ENCODE measurements at regions of chr15 and their contacts with region 1.

Region 1: DNA sequence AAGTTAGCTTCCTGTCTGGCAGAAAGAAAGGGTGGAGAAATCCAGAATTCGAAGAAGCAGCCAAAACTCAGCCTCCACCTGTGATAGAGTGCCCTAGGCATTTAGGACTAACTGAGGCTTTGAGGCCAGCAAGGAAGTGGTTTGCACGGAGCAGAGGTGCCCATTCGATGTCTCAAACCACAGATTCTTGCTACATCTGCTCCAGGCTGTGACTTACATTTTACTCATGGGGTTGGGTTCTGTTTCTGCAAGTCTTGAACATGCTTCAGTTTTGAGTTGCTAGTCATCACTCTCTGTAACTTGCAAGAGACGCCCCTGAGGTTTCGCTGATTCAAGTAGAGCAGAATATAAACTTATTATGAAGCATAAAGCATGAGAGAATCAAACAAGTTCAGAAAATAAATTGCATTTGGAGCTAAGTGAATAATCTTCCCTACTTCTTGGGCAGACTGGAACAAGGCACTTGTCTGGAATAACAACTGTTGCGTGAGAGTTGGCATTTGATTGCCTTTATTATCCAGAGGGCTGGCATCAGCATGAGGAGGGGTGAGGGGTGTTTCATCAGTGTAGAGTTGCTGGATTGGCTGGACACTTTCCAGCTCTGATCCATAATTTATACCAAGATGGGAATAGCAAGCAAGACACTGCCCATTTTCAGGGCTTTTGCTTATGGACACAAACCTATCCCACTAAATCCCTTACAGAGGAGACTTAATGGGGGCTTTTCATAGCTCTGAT is 256.5 kb downstream of the AGBL1 start:
- DNase-seq: peak; percentile 100
- H3K4me3 ChIP-seq: peak overlapping the region in 2 of 3 experiments; percentile 3 to 32
- H3K27ac ChIP-seq: peak overlapping the region; percentile 95
- H3K4me1 ChIP-seq: peaks cover 23% of the 10 kb centered on the region
- H3K27me3 ChIP-seq: no peaks in the 10 kb centered on the region
- CTCF ChIP-seq: no peak

Region 2: DNA sequence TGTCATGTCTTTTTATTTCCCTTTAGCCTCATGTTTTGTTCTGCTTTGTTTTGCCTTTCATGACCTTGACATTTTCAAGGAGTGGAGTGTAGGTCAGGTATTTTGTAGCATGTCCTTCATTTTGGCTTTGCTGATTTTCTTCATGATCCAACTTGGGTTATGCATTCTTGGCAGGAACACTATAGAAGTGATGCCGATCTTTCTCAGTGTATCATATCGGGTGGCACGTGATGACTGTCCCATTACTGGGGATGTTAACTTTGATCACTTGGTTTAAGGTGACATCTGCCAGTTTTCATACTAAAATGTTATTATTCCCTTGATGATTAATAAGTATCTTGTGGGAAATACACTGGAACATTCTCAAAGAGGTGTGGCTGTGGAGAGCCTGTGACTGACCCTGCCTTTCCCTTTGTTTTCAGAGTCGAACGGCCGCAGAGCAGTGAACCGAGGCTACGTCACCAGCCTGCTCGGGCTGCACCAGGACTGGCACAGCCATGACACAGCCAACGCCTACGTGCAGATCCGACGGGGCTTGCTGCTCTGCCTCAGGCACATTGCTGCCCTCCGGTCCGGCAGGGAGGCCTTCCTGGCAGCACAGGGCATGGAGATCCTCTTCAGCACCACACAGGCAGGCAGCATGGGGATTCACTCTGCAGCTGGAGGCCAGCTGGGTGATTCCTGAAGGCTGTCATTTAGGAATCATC is 88.8 kb before region 1 on chr15:
- CTCF ChIA-PET with region 1: no interaction called
- dilution Hi-C with region 1: no loop called
- in situ Hi-C with region 1: no loop called
- intact Hi-C with region 1: loop called (anchors 5 kb)
- DNase-seq: peak; percentile 92
- H3K4me3 ChIP-seq: no peak overlapping the region
- H3K27ac ChIP-seq: peak overlapping the region; percentile 55
- H3K4me1 ChIP-seq: peaks cover 14% of the 10 kb centered on the region
- H3K27me3 ChIP-seq: no peaks in the 10 kb centered on the region
- CTCF ChIP-seq: no peak

Region 3: DNA sequence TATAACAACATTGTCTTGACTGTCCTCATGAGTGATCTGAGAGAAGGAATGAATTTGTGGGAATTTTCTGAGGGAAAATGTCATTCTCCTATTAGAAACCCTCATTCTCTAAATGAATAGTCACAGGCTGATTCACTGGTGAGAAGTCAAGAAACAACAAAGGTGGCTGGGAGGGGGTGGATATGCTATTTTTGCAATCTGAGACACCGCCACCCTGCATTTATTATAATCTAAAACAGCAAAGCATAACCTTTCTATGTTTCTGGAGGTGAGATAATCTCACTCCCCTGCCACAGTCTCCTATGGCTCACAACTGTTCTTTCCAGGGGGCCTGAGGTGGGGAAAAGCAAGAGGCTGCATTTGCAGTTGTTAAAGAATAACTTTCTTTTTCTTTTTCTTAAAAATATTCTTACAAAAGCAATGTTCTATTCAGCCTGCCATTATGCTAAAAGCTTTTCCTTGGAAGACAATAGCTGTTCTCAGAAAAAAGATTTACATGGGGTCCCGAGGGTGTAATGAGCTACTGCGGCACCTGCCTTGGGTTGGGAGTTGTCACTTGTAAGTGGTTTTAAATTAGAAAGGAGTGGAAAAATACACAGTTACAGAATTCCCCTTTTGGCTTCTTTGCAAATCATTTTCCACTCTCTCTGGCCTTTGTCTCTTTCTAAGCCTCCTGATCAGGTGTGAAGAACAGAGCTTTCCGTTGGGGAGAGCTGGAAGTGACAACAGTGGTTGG is 35.7 kb before region 1 on chr15:
- CTCF ChIA-PET with region 1: no interaction called
- dilution Hi-C with region 1: no loop called
- in situ Hi-C with region 1: no loop called
- intact Hi-C with region 1: loop called (anchors 5 kb)
- DNase-seq: peak; percentile 67
- H3K4me3 ChIP-seq: no peak overlapping the region
- H3K27ac ChIP-seq: peak overlapping the region; percentile 22
- H3K4me1 ChIP-seq: peaks cover 13% of the 10 kb centered on the region
- H3K27me3 ChIP-seq: no peaks in the 10 kb centered on the region
- CTCF ChIP-seq: no peak

Region 4: DNA sequence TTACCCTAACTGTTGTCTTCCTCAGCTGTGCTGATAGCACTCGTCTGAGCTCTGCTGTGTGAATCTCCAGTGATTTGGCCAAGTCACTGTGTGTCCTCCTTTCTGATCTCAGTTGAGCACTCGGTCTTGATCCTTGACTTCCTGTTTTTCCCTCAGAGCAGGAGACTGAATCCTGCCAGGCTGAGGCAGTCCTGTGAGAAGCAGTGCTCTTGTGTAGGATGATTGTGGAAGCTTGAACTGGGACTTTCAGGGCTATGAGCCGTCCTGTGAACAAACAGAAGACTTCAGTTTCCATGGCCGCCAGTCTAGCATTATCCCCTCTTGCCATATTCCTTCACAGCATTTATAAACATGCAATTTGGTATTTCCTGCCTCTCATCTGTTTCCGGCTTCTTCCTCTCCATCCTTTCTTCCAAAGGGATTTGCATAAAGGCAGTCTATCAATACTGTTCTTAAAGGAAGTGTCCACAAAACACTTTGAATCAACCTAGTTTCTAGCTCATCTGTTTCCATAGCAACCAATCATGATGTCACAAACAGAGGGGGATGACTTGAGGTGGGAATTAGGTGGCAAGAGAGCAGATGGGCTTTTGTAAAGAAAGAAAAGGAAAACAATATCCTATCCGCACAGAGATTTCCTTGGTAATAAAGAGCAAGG is 19.4 kb before region 1 on chr15:
- CTCF ChIA-PET with region 1: no interaction called
- dilution Hi-C with region 1: no loop called
- in situ Hi-C with region 1: no loop called
- intact Hi-C with region 1: loop called (anchors 1 kb)
- DNase-seq: no peak
- H3K4me3 ChIP-seq: no peak overlapping the region
- H3K27ac ChIP-seq: peak overlapping the region; percentile 26
- H3K4me1 ChIP-seq: peaks cover 6% of the 10 kb centered on the region
- H3K27me3 ChIP-seq: no peaks in the 10 kb centered on the region
- CTCF ChIP-seq: no peak

Region 5: GRCh38 chr15:86362555-86362954 is 26.3 kb after region 1 on chr15:
- CTCF ChIA-PET with region 1: no interaction called
- dilution Hi-C with region 1: no loop called
- in situ Hi-C with region 1: no loop called
- intact Hi-C with region 1: loop called (anchors 2 kb)
- DNase-seq: peak; percentile 98
- H3K4me3 ChIP-seq: no peak overlapping the region
- H3K27ac ChIP-seq: peak overlapping the region; percentile 75
- H3K4me1 ChIP-seq: peaks cover 16% of the 10 kb centered on the region
- H3K27me3 ChIP-seq: no peaks in the 10 kb centered on the region
- CTCF ChIP-seq: no peak

Region 6: GRCh38 chr15:86384186-86384585 is 48.0 kb after region 1 on chr15:
- CTCF ChIA-PET with region 1: no interaction called
- dilution Hi-C with region 1: no loop called
- in situ Hi-C with region 1: no loop called
- intact Hi-C with region 1: no loop called
- DNase-seq: no peak
- H3K4me3 ChIP-seq: no peak overlapping the region
- H3K27ac ChIP-seq: no peak overlapping the region
- H3K4me1 ChIP-seq: no peaks in the 10 kb centered on the region
- H3K27me3 ChIP-seq: no peaks in the 10 kb centered on the region
- CTCF ChIP-seq: no peak

Region 7: DNA sequence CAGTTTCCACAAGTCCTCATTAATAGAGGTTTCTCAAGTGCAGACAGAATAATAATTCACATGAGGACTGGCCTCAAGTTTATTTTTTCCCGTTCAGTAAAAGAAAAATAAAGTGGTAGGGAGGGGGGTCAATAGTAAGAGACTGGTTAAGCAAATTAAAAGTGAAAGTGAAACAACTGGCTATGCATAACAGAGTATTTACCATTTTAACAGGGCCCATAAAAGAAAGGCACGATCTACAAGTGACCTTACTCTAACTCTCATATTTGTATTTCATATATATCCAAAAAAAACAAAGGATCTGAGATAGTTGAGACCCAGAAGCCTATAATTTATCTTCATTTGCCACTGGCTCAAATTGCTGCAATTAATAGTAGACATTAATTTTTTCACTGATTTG is 1234.0 kb after region 1 on chr15:
- CTCF ChIA-PET with region 1: no interaction called
- dilution Hi-C with region 1: no loop called
- in situ Hi-C with region 1: no loop called
- intact Hi-C with region 1: loop called (anchors 10 kb)
- DNase-seq: no peak
- H3K4me3 ChIP-seq: no peak overlapping the region
- H3K27ac ChIP-seq: no peak overlapping the region
- H3K4me1 ChIP-seq: peaks cover 35% of the 10 kb centered on the region
- H3K27me3 ChIP-seq: no peaks in the 10 kb centered on the region
- CTCF ChIP-seq: no peak